ENCODE measurements at regions of chr14 and their contacts with region 1.

Region 1: GRCh38 chr14:22852940-22853767 is 16.8 kb downstream of the MMP14 start:
- DNase-seq: peak; percentile 81
- H3K4me3 Mint-ChIP-seq: peak overlapping the region; percentile 70
- H3K27ac Mint-ChIP-seq: peak overlapping the region; percentile 64
- H3K4me1 Mint-ChIP-seq: peaks cover 25% of the 10 kb centered on the region
- H3K27me3 Mint-ChIP-seq: no peaks in the 10 kb centered on the region
- CTCF ChIP-seq: peak; percentile 85

Region 2: DNA sequence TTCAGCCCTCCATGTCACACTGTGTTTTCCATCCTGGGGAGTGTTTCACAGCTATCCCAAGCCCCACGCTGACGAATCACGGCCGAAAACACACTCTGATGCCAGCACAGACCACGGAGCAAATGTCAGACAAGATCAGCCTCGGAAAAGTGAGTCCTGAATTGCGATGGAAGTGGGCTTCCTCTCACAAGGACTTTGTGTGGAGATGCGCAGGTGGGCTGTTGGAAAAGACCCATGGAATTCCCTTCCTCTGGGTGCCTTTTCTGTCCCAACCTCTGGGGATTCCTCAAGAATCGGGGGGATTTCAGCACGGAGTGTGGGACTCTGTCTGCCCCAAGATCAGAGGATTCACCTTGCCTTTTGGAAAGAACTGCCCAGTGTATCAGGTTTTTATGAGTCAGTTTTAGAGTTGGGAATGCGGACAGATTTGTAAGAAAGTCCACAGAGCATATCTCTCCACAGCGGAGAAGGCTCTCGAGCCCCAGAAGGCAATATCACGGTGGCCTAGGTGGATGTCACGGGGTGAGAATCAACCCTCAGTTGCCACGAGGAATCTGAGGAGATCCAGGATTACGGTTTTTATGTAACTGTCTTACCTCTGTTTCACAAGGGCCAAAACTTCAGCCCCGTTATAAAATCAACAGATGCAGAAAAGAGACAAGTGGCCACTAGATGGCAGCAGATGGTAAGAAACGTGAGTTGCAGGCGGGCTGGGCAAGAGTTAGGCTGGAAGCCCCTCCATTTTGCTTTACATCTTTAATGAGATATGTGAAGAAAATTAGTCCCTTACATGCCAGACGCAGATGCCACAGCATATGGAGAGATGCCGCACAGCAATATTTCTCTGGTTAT is 466.0 kb before region 1 on chr14:
- CTCF ChIA-PET with region 1: interaction called, 13 read pairs
- POLR2A ChIA-PET with region 1: no interaction called
- intact Hi-C with region 1: loop called (anchors 10 kb)
- DNase-seq: peak; percentile 79
- H3K4me3 Mint-ChIP-seq: no peak overlapping the region
- H3K27ac Mint-ChIP-seq: no peak overlapping the region
- H3K4me1 Mint-ChIP-seq: peaks cover 27% of the 10 kb centered on the region
- H3K27me3 Mint-ChIP-seq: no peaks in the 10 kb centered on the region
- CTCF ChIP-seq: peak; percentile 72

Region 3: DNA sequence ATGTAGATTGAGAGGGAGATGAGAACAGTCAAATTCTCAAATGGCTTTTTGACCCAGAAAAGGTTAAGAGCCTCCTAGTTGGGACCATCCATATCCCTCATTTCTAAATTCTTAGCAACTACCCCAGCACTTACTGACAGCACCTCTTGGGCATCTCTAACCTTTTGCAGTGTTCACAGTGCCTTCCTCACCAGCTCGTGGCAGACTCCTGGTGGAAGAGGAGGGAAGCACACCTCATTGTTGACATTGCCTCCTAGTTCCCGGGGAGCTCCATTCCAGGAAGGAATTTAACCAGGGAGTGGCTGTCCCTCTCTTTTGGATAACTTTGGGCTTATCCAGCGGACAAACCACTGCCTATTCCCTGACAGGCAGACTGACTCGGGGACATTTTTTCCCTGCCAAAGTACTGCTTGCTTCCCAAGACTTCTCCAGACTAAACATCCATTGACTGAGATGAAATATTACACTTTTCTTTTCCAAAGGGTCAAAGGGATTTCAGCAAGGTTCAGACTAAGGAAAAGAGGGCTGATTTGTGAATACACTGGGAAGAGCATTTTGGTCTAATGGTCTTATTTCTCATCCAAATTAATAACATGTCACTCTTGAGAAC is 200.0 kb before region 1 on chr14:
- CTCF ChIA-PET with region 1: interaction called, 84 read pairs
- POLR2A ChIA-PET with region 1: interaction called, 3 read pairs
- intact Hi-C with region 1: loop called (anchors 1 kb)
- DNase-seq: peak; percentile 87
- H3K4me3 Mint-ChIP-seq: no peak overlapping the region
- H3K27ac Mint-ChIP-seq: no peak overlapping the region
- H3K4me1 Mint-ChIP-seq: peaks cover 10% of the 10 kb centered on the region
- H3K27me3 Mint-ChIP-seq: no peaks in the 10 kb centered on the region
- CTCF ChIP-seq: peak; percentile 84

Region 4: GRCh38 chr14:22774011-22774706 is 79.0 kb before region 1 on chr14:
- CTCF ChIA-PET with region 1: interaction called, 36 read pairs
- POLR2A ChIA-PET with region 1: no interaction called
- intact Hi-C with region 1: loop called (anchors 1 kb)
- DNase-seq: no peak
- H3K4me3 Mint-ChIP-seq: no peak overlapping the region
- H3K27ac Mint-ChIP-seq: no peak overlapping the region
- H3K4me1 Mint-ChIP-seq: peaks cover 2% of the 10 kb centered on the region
- H3K27me3 Mint-ChIP-seq: no peaks in the 10 kb centered on the region
- CTCF ChIP-seq: no peak

Region 5: GRCh38 chr14:22822571-22823098 is 30.5 kb before region 1 on chr14:
- CTCF ChIA-PET with region 1: interaction called, 186 read pairs
- POLR2A ChIA-PET with region 1: interaction called, 20 read pairs
- intact Hi-C with region 1: loop called (anchors 1 kb)
- DNase-seq: peak; percentile 85
- H3K4me3 Mint-ChIP-seq: peak overlapping the region; percentile 29
- H3K27ac Mint-ChIP-seq: no peak overlapping the region
- H3K4me1 Mint-ChIP-seq: peaks cover 18% of the 10 kb centered on the region
- H3K27me3 Mint-ChIP-seq: no peaks in the 10 kb centered on the region
- CTCF ChIP-seq: peak; percentile 86

Region 6: DNA sequence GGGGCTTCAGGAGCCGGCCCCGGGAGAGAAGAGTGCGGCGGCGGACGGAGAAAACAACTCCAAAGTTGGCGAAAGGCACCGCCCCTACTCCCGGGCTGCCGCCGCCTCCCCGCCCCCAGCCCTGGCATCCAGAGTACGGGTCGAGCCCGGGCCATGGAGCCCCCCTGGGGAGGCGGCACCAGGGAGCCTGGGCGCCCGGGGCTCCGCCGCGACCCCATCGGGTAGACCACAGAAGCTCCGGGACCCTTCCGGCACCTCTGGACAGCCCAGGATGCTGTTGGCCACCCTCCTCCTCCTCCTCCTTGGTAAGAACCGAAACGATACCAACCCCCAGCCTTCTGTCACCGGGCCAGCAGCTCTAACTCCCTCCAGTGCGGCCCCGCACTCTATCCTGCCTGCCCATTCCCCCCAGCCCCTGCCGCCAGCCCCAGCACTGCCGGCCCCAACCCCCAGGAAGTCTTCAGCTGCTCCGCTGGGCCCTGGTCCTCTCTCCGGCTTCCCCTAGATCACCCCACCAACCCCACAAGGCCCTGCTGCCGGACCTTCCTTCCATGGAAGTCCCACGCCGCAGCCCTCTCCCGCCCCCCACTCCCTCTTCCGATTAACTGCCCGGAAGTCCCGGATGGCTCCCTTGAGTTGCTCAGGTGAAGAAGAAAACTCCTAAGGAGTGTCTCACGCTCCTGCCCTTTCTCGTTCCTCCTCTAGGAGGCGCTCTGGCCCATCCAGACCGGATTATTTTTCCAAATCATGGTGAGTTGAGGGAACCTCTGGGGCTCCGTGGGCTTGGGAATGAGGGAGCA is 19.1 kb after region 1 on chr14:
- CTCF ChIA-PET with region 1: interaction called, 154 read pairs
- POLR2A ChIA-PET with region 1: interaction called, 17 read pairs
- intact Hi-C with region 1: no loop called
- DNase-seq: peak; percentile 90
- H3K4me3 Mint-ChIP-seq: peak overlapping the region; percentile 79
- H3K27ac Mint-ChIP-seq: peak overlapping the region; percentile 91
- H3K4me1 Mint-ChIP-seq: peaks cover 20% of the 10 kb centered on the region
- H3K27me3 Mint-ChIP-seq: no peaks in the 10 kb centered on the region
- CTCF ChIP-seq: peak; percentile 81

Measured in MCF 10A (cell line).